T-cell (primary cell): ENCODE measurements at regions of chr6 and their contacts with region 1.

Region 1: DNA sequence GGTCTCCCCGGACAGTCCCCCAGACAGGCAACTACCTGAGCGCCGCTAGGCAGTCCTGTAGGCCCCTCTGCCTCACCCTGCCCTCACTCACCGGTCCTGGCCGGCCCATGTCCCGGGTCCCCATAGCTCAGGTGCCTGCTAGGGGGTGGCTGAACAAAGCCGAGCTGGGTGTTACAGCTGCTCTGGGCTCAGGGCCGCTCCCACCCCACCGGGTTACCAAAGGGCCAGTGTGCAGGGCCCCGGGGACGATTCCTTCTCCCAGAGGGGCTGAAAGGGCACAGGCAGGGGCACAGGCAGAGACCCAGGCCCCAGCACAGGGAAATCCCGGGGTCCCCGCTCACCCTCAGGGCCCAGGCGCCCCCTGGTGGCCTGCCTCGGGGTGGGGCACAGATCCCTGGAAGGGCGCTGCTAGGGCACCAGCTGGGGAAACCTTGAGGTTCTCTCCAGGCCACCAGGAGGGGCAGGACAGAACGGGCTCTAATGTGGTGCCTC is 118.4 kb downstream of the GRM4 start:
- DNase-seq: peak; percentile 15 to 77 (median 56)
- ATAC-seq: peak; percentile 56 to 81 (median 70)
- H3K4me3 ChIP-seq: no peak overlapping the region
- H3K4me3 Mint-ChIP-seq: no peak overlapping the region
- H3K27ac ChIP-seq: no peak overlapping the region
- H3K27ac Mint-ChIP-seq: no peak overlapping the region
- H3K4me1 ChIP-seq: peaks cover 0 to 4% of the 10 kb centered on the region in 2 experiments
- H3K4me1 Mint-ChIP-seq: peaks cover 0 to 6% (median 0%) of the 10 kb centered on the region in 3 donors
- H3K27me3 ChIP-seq: peaks cover 0 to 55% of the 10 kb centered on the region in 2 experiments
- H3K27me3 Mint-ChIP-seq: peaks cover 0 to 6% of the 10 kb centered on the region in 2 donors

Region 2: DNA sequence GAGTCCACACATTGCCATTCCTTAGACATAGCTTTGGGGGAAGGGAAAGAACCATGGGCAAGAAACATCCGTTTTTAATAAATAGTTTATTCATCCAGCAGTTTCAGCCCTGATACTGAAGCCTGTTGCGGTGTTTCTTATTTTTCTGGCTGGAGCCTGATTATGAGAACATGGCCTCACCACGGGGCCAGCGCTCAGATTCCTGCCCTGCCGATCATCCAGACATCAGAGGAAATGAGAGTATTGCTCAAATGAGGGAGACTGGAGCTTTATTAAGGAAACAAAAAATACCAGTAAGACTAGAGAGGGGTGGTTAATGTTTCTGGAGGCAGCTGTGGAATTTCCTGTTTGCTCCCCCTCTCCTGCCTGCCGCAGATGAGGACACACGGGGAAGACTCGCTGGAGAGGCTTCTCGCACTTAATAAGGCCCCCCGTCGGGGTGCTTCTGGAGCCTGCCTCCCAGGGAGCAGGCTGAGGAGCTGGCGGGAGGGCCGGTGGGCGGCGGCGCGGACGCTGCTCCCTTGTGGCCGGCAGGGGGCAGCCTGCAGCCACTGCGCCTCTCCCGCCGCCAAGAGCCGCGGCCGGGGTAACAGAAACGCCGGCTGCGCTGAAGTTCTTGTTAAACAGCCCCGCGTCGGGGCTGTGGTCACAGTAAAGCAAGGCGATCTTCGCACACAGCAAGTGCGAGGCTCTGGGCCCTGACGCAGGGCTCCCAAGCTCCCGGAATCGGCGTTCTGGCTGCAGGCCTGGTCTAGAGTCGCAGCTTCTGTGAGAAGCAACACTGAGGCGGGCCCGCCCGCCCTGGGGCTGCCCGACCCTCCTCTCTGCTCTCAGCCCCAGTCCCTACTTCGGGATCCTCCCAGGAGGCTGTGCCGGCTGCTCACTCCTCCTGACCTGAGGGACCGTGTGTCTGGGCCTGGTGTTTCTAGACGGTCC is 256.1 kb before region 1 on chr6:
- CTCF ChIA-PET with region 1: interaction called, 4 to 12 read pairs
- POLR2A ChIA-PET with region 1: no interaction called
- DNase-seq: peak; percentile 24 to 82 (median 55)
- ATAC-seq: peak; percentile 74 to 77 (median 75)
- H3K4me3 ChIP-seq: no peak overlapping the region
- H3K4me3 Mint-ChIP-seq: no peak overlapping the region
- H3K27ac ChIP-seq: no peak overlapping the region
- H3K27ac Mint-ChIP-seq: peak overlapping the region in 1 of 2 donors; percentile 44
- H3K4me1 ChIP-seq: peaks cover 0 to 20% of the 10 kb centered on the region in 2 experiments
- H3K4me1 Mint-ChIP-seq: peaks cover 10 to 15% (median 14%) of the 10 kb centered on the region in 3 donors
- H3K27me3 ChIP-seq: peaks cover 0 to 24% of the 10 kb centered on the region in 2 experiments
- H3K27me3 Mint-ChIP-seq: peaks cover 0 to 4% of the 10 kb centered on the region in 2 donors

Region 3: GRCh38 chr6:33840048-33840926 is 187.2 kb before region 1 on chr6:
- CTCF ChIA-PET with region 1: no interaction called
- POLR2A ChIA-PET with region 1: no interaction called
- DNase-seq: peak in 1 of 35 experiments; percentile 22
- ATAC-seq: peak; percentile 43 to 89 (median 73)
- H3K4me3 ChIP-seq: no peak overlapping the region
- H3K4me3 Mint-ChIP-seq: no peak overlapping the region
- H3K27ac ChIP-seq: no peak overlapping the region
- H3K27ac Mint-ChIP-seq: peak overlapping the region; percentile 2 to 64
- H3K4me1 ChIP-seq: peaks cover 0 to 11% of the 10 kb centered on the region in 2 experiments
- H3K4me1 Mint-ChIP-seq: peaks cover 12 to 15% (median 13%) of the 10 kb centered on the region in 3 donors
- H3K27me3 ChIP-seq: peaks cover 0 to 13% of the 10 kb centered on the region in 2 experiments
- H3K27me3 Mint-ChIP-seq: peaks cover 0 to 5% of the 10 kb centered on the region in 2 donors

Region 4: GRCh38 chr6:34005901-34006531 is 21.5 kb before region 1 on chr6:
- CTCF ChIA-PET with region 1: no interaction called
- POLR2A ChIA-PET with region 1: no interaction called
- DNase-seq: no peak
- ATAC-seq: no peak
- H3K4me3 ChIP-seq: no peak overlapping the region
- H3K4me3 Mint-ChIP-seq: no peak overlapping the region
- H3K27ac ChIP-seq: no peak overlapping the region
- H3K27ac Mint-ChIP-seq: no peak overlapping the region
- H3K4me1 ChIP-seq: no peaks in the 10 kb centered on the region
- H3K4me1 Mint-ChIP-seq: no peaks in the 10 kb centered on the region
- H3K27me3 ChIP-seq: peaks cover 2 to 30% of the 10 kb centered on the region in 2 experiments
- H3K27me3 Mint-ChIP-seq: peaks cover 10 to 21% of the 10 kb centered on the region in 2 donors

Region 5: GRCh38 chr6:34852406-34853085 is 825.1 kb after region 1 on chr6:
- CTCF ChIA-PET with region 1: no interaction called
- POLR2A ChIA-PET with region 1: no interaction called
- DNase-seq: no peak
- ATAC-seq: no peak
- H3K4me3 ChIP-seq: no peak overlapping the region
- H3K4me3 Mint-ChIP-seq: no peak overlapping the region
- H3K27ac ChIP-seq: no peak overlapping the region
- H3K27ac Mint-ChIP-seq: no peak overlapping the region
- H3K4me1 ChIP-seq: no peaks in the 10 kb centered on the region
- H3K4me1 Mint-ChIP-seq: peaks cover 0 to 2% (median 0%) of the 10 kb centered on the region in 3 donors
- H3K27me3 ChIP-seq: no peaks in the 10 kb centered on the region
- H3K27me3 Mint-ChIP-seq: no peaks in the 10 kb centered on the region